ENCODE measurements at regions of chr6 and their contacts with region 1.

Region 1: GRCh38 chr6:45922728-45923351 is 92.8 kb downstream of the CLIC5 start:
- DNase-seq: peak; percentile 83
- H3K4me3 Mint-ChIP-seq: peak overlapping the region; percentile 67
- H3K27ac Mint-ChIP-seq: peak overlapping the region; percentile 97
- H3K4me1 Mint-ChIP-seq: peaks cover 52% of the 10 kb centered on the region
- H3K27me3 Mint-ChIP-seq: no peaks in the 10 kb centered on the region

Region 2: GRCh38 chr6:44475779-44476434 is 1446.9 kb before region 1 on chr6:
- CTCF ChIA-PET with region 1: interaction called, 30 read pairs
- POLR2A ChIA-PET with region 1: no interaction called
- intact Hi-C with region 1: loop called (anchors 2 kb)
- DNase-seq: peak; percentile 81
- H3K4me3 Mint-ChIP-seq: no peak overlapping the region
- H3K27ac Mint-ChIP-seq: no peak overlapping the region
- H3K4me1 Mint-ChIP-seq: no peaks in the 10 kb centered on the region
- H3K27me3 Mint-ChIP-seq: peaks cover 5% of the 10 kb centered on the region

Region 3: DNA sequence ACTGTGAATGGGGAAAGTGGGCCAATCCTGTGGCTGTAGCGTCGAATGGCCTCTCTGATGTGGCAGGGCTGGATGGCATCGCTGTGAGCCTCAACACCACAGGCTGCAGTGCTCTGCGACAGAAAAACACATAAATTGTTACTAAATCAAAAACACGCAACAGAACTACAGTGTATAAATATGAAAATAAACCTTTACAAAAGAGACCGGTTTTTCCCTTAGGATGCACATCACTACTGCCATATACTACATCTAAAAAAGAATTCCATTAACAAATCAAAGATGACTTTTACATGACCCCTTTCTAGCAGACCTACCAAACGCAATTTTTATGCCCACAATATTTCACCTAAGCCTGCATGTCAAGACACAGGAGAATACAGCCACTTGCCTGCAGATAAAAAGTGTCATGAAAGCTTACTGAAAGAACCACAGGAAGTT is 990.2 kb before region 1 on chr6:
- CTCF ChIA-PET with region 1: no interaction called
- POLR2A ChIA-PET with region 1: no interaction called
- intact Hi-C with region 1: loop called (anchors 5 kb)
- DNase-seq: peak; percentile 43
- H3K4me3 Mint-ChIP-seq: peak overlapping the region; percentile 80
- H3K27ac Mint-ChIP-seq: peak overlapping the region; percentile 88
- H3K4me1 Mint-ChIP-seq: peaks cover 41% of the 10 kb centered on the region
- H3K27me3 Mint-ChIP-seq: no peaks in the 10 kb centered on the region

Region 4: DNA sequence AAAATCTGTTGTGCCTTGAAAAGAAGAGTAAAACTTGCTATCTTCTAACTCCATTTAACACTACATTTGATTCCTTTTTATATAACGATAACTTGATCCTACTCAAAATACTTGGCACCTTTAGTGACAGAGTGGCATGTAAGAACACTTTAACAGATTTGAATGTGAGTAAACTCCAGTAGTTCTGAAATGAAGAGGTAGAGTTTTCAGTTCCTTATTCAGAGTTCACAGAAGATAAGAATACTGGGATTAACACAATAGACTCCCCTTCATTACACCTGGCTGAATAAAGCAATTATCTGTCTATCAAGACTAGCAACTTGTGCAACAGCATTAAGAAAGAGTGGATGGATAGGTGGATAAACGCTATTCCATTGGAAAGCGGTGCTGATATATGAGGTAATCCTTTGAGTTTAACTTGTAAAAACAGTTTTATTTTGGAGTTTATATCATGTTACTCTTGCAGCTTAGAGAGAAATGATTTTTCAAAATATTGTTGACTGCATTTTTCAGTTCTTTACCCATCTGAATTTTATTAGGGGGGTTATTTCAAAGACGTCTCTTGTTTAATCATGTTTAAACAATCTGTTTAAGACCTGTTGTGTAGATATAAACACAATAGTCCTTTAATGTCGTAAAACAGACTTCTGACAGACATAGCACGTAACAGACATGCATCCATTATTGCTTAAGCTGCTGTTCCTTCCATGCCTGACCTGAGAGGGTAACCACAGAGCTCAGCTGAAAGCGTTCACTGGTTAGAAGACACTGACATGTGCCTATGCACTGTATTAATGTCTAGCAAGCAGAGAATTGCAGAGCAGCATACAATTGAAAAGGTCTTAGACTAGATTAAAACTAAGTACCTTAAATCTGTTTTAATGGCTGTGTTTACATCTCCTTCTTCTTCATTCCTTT is 442.7 kb before region 1 on chr6:
- CTCF ChIA-PET with region 1: interaction called, 3 read pairs
- POLR2A ChIA-PET with region 1: no interaction called
- intact Hi-C with region 1: loop called (anchors 1 kb)
- DNase-seq: no peak
- H3K4me3 Mint-ChIP-seq: no peak overlapping the region
- H3K27ac Mint-ChIP-seq: no peak overlapping the region
- H3K4me1 Mint-ChIP-seq: peaks cover 17% of the 10 kb centered on the region
- H3K27me3 Mint-ChIP-seq: no peaks in the 10 kb centered on the region

Region 5: DNA sequence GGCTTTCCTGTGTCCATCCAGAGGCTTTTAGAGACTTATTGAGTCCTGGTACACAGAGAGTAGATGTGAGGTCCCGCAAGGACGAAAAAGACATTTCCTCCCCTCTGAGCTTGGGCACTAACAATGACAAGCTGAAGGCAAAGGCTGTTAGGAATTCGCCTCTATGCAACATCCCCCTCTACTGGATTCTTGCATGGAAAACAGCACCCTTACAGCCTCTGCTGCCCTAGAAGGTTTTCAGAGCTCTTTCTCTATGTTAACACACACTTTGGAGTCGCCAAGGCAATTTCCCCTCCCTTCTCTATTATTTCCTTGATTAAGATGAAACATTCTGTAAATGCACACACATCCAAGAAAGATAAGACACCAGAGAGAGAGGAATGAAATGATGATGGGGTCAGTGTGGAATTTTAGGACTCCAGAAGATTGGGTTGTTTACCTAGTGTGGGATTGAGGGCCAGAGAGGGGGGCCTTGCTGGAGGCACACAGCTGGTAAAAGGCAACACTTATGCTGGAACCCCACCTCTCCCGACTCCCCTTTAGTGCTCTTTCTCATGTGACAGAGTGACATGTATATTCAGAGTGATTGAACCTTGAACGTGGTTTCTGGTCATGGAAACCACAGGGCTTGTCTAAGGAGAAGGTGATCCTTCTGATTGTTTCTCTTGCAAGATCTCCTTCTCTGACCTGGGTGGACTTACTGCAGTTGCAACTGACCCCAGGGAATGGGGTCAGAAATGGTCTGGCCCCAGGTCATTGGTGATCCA is 207.9 kb before region 1 on chr6:
- CTCF ChIA-PET with region 1: interaction called, 26 read pairs
- POLR2A ChIA-PET with region 1: interaction called, 29 read pairs
- intact Hi-C with region 1: loop called (anchors 1 kb)
- DNase-seq: peak; percentile 62
- H3K4me3 Mint-ChIP-seq: no peak overlapping the region
- H3K27ac Mint-ChIP-seq: peak overlapping the region; percentile 93
- H3K4me1 Mint-ChIP-seq: peaks cover 73% of the 10 kb centered on the region
- H3K27me3 Mint-ChIP-seq: no peaks in the 10 kb centered on the region

Region 6: DNA sequence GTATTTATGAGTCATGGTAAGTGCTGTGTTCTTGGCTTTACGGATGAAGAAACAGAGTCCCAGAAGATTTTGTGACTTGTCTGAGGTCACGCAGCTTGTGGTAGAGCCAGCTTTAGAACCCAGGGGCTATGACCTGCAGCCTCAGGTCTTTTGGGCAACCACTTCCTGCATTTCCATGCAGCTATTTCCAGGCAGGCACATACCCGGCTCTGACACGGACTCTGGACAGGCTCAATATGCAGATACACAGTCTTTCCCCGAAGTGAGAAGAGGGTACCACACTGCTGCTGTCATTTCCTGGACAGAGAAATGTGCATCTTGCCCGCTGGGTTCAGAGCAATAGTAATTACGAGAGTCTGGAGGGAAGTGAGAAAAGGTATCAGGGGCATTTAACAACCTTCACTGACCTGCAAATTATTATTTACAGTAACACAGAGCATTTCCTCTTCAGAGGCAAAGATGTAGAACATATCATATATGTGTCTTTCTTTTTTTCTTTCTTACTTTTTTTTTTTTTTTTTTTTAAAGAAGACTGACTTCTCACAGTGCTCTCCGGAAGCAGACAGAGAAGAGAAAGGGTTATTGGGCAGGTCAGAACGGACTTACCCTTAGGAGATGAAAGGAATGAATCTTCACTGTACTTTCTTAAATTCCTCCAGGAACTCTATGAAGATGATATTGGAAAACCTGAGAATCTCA is 92.2 kb before region 1 on chr6:
- CTCF ChIA-PET with region 1: interaction called, 15 read pairs
- POLR2A ChIA-PET with region 1: interaction called, 51 read pairs
- intact Hi-C with region 1: loop called (anchors 1 kb)
- DNase-seq: peak; percentile 88
- H3K4me3 Mint-ChIP-seq: peak overlapping the region; percentile 75
- H3K27ac Mint-ChIP-seq: peak overlapping the region; percentile 95
- H3K4me1 Mint-ChIP-seq: peaks cover 59% of the 10 kb centered on the region
- H3K27me3 Mint-ChIP-seq: peaks cover 2% of the 10 kb centered on the region